ENCODE measurements at regions of chr19 and their contacts with region 1.

Region 1: DNA sequence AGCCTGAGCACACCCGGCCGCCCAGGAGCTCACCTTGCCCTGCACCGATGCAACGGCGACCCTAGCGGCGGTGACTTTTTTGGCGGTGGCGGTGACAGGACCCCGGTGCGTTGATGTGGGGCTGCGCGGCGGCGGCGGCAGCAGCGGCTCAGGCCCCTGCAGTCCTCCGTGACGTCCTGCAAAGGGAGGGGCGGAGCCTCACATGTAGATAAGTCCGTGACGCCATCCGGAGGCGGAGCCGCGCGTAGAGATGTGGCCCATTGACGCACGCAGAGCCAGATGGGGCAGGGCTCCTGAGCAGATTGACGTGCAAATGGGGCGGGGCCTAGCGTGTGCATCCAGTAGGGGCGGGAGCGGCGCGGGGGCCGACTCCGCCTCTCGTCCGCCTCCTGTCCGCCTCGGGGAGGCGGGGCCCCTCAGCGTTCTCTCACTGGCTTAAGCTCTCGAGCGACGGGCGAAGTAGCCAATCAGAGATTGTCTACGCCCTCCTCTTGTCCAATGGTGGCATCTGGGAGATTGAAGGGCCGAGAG is at the start of gene RAB3A:
- DNase-seq: peak; percentile 100
- ATAC-seq: peak; percentile 93 to 96 (median 94)
- H3K4me3 ChIP-seq: peak within 1 kb of the TSS; percentile 51 to 80 (median 72)
- H3K27ac ChIP-seq: peak within 1 kb of the TSS; percentile 94 to 100 (median 97)
- H3K4me1 ChIP-seq: peaks cover 11 to 35% (median 22%) of the 10 kb centered on the region in 9 donors
- H3K27me3 ChIP-seq: peaks cover 0 to 8% (median 0%) of the 10 kb centered on the region in 7 donors
- CTCF ChIP-seq: peak in 2 of 9 donors; percentile 12 to 21
- total RNA-seq, gene RAB3A: 24.1 to 36.3 (median 31.4) TPM

Region 2: GRCh38 chr19:18224525-18225354 is 20.8 kb after region 1 on chr19:
- intact Hi-C with region 1: loop called in 2 of 10 experiments (anchors 2 kb)
- DNase-seq: peak; percentile 98 to 99
- ATAC-seq: peak; percentile 97 to 99 (median 98)
- H3K4me3 ChIP-seq: peak overlapping the region in 9 of 10 donors; percentile 35 to 65 (median 52)
- H3K27ac ChIP-seq: peak overlapping the region; percentile 50 to 84 (median 71)
- H3K4me1 ChIP-seq: peaks cover 14 to 41% (median 30%) of the 10 kb centered on the region in 9 donors
- H3K27me3 ChIP-seq: peaks cover 9 to 70% (median 64%) of the 10 kb centered on the region in 7 donors
- CTCF ChIP-seq: no peak

Region 3: GRCh38 chr19:18322759-18323460 is 119.0 kb after region 1 on chr19 and contains the start of gene LSM4:
- intact Hi-C with region 1: loop called in 7 of 10 experiments (anchors 1 to 10 kb)
- DNase-seq: peak; percentile 98
- ATAC-seq: peak; percentile 96 to 98 (median 97)
- H3K4me3 ChIP-seq: peak within 1 kb of the TSS; percentile 58 to 92 (median 78)
- H3K27ac ChIP-seq: peak within 1 kb of the TSS; percentile 63 to 98 (median 92)
- H3K4me1 ChIP-seq: peaks cover 0 to 62% (median 57%) of the 10 kb centered on the region in 9 donors
- H3K27me3 ChIP-seq: no peaks in the 10 kb centered on the region
- CTCF ChIP-seq: peak in 4 of 9 donors; percentile 12 to 42 (median 28)
- total RNA-seq, gene LSM4: 73.2 to 114 (median 93.3) TPM

Region 4: DNA sequence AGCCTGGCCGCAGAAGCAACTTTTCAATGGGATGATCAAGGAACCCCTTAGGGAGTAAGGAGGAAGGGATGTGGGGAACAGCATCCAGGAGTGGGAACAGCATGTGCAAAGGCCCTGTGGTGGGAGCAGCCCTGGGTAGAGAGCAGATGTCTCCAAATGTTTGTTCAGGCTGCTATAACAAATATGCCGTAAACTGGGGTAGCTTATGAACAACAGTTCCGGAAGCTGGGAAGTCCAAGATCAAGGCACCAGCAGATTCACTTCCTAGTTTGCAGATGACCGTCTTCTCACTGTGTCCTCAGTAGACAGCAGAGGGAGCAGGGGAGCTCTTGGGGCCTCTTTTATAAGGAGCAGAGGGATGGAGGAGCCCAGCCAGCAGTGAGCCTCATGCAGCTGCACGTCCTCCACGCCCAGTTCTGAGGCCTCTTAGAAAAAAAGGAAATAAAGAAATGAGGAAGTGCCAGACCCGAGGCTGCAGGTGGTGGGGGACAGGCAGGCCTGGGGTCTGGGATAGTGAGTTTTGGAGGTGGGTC is 197.7 kb after region 1 on chr19:
- intact Hi-C with region 1: loop called in 2 of 10 experiments (anchors 10 kb)
- DNase-seq: peak; percentile 47 to 66
- ATAC-seq: peak; percentile 67 to 90 (median 83)
- H3K4me3 ChIP-seq: no peak overlapping the region
- H3K27ac ChIP-seq: peak overlapping the region in 3 of 10 donors; percentile 7 to 88 (median 26)
- H3K4me1 ChIP-seq: peaks cover 0 to 58% (median 0%) of the 10 kb centered on the region in 9 donors
- H3K27me3 ChIP-seq: peaks cover 0 to 15% (median 9%) of the 10 kb centered on the region in 7 donors
- CTCF ChIP-seq: peak in 7 of 9 donors; percentile 17 to 51 (median 38)

Measured in heart right ventricle (tissue), 16 donors.